GM12878 (cell line): ENCODE measurements at regions of chr7 and their contacts with region 1.

Region 1: DNA sequence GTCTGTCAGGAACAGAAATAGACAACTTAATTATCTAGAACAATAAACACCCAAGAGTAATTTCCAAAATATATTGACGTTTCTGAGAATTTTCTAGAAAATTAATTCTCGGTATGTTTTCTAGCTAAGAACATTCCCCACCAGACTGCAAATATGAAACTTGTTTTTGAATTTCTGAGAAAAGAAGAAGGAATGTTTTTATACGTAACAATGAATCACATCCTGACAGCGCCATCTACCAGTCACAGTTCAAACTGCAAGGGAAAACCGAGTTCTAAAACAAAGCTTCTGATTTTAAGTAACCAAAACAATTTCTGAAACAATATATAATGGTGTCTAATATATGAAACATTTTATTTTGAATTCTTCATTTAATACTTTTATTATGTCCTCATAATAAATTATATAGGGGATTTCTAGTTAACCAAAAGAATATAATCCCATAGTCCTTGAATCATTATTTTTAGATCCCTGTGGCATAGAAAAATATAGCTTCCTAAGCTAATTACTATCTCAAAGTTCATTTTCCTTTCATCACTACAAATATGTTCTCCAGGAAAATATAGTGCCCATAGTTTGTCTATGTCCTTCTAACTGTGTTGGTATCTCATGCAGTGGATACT is 34.5 kb upstream of the MEOX2 start:
- DNase-seq: no peak
- ATAC-seq: no peak
- H3K4me3 ChIP-seq: no peak overlapping the region
- H3K27ac ChIP-seq: no peak overlapping the region
- H3K4me1 ChIP-seq: no peaks in the 10 kb centered on the region
- H3K27me3 ChIP-seq: no peaks in the 10 kb centered on the region
- CTCF ChIP-seq: peak; percentile 53 to 77 (median 64)
- EP300 ChIP-seq: no peak
- POLR2A ChIP-seq: no peak
- RAD21 ChIP-seq: peak; percentile 57

Region 2: DNA sequence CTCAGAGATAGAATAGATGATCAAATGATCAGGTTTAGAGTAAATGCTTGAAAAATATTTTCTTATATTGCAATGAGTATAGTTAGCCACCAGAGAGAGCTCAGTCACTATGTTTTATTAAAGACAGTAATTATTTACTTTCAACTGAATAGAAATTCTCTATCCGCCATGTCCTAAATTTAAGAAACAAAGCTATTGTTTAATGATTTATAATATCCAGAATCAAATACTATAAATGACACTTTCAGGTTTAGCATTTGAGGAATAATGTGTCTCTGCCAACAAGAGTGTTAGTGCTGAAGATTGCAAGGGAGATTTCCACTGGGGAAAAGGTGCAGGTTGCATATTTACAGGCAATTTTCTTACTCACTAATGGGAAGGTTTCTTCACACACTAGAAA is 1003.1 kb before region 1 on chr7:
- CTCF ChIA-PET with region 1: interaction called, 6 read pairs
- POLR2A ChIA-PET with region 1: no interaction called
- RAD21 ChIA-PET with region 1: interaction called, 5 read pairs
- SMC1A ChIA-PET with region 1: no interaction called
- in situ Hi-C with region 1: loop called (anchors 25 kb)
- intact Hi-C with region 1: no loop called
- DNase-seq: no peak
- ATAC-seq: no peak
- H3K4me3 ChIP-seq: no peak overlapping the region
- H3K27ac ChIP-seq: no peak overlapping the region
- H3K4me1 ChIP-seq: no peaks in the 10 kb centered on the region
- H3K27me3 ChIP-seq: peaks cover 0 to 3% of the 10 kb centered on the region in 2 experiments; a peak in 1 of 4 replicates
- CTCF ChIP-seq: peak in 2 of 3 experiments; percentile 7 to 12; a peak in 3 of 6 replicates
- EP300 ChIP-seq: no peak
- POLR2A ChIP-seq: no peak
- RAD21 ChIP-seq: peak; percentile 49

Region 3: DNA sequence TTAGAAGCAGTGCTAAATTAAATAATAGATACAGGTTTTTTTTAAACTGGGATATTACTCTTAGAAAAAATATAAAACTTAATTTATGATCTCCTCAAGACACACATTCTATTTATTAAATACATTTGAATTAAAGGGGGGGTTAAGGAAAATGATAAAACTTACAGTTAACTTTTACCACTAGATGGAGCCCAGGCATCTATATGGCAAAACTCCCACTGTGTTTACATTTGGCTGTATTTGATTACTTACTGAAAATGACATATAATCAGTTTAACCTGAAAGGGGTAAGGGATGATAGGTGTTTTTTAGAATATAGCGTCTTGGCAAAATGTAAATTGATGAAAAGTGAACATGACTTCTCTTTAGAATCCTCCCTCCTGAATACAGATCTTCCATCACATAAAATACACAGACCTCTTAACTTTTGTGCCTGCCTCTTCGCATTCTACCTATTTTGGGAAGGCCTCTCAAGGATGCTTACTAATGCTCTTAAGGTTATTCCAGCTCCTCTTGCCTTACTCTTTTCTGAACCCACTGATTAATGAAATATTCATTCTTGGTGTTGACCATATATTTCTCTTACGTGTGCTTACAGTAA is 394.8 kb before region 1 on chr7:
- CTCF ChIA-PET with region 1: interaction called, 94 read pairs
- POLR2A ChIA-PET with region 1: interaction called, 3 read pairs
- RAD21 ChIA-PET with region 1: interaction called, 26 read pairs
- SMC1A ChIA-PET with region 1: interaction called, 68 read pairs
- in situ Hi-C with region 1: no loop called
- intact Hi-C with region 1: loop called (anchors 1 kb)
- DNase-seq: no peak
- ATAC-seq: peak; percentile 62
- H3K4me3 ChIP-seq: no peak overlapping the region
- H3K27ac ChIP-seq: no peak overlapping the region
- H3K4me1 ChIP-seq: no peaks in the 10 kb centered on the region
- H3K27me3 ChIP-seq: no peaks in the 10 kb centered on the region
- CTCF ChIP-seq: peak; percentile 21 to 49 (median 28); a peak in 3 of 6 replicates
- EP300 ChIP-seq: no peak
- POLR2A ChIP-seq: no peak
- RAD21 ChIP-seq: peak; percentile 33

Region 4: DNA sequence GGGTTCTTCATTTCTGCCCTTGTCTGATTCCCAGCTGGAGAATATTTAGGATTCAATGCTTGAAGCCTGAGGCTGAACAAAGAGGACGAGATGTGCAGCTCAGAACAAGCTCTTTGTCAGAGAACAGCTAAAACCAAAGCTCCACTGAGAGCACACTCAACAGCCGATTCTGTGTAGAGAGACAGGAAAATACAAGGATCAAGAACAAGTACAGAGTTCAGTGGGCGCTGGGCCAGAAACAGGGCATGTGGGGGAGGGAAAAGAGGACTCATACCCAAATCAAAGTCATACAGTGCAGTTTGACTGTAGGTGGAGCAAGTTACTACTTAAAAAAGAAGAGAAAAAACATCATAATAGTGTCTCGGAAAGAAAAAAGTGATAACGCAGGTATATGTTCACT is 159.1 kb before region 1 on chr7 and contains the start of gene AGMO:
- CTCF ChIA-PET with region 1: interaction called, 55 read pairs
- POLR2A ChIA-PET with region 1: interaction called, 4 read pairs
- RAD21 ChIA-PET with region 1: interaction called, 37 read pairs
- SMC1A ChIA-PET with region 1: interaction called, 32 read pairs
- in situ Hi-C with region 1: no loop called
- intact Hi-C with region 1: no loop called
- DNase-seq: no peak
- ATAC-seq: peak; percentile 37
- H3K4me3 ChIP-seq: no peak within 1 kb of the TSS
- H3K27ac ChIP-seq: no peak within 1 kb of the TSS
- H3K4me1 ChIP-seq: no peaks in the 10 kb centered on the region
- H3K27me3 ChIP-seq: no peaks in the 10 kb centered on the region
- CTCF ChIP-seq: no peak; a peak in 1 of 6 replicates
- EP300 ChIP-seq: no peak
- POLR2A ChIP-seq: no peak
- RAD21 ChIP-seq: no peak
- polyA plus RNA-seq, gene AGMO: 0.29 TPM in 1 of 2 experiments, not detected in the other

Region 5: DNA sequence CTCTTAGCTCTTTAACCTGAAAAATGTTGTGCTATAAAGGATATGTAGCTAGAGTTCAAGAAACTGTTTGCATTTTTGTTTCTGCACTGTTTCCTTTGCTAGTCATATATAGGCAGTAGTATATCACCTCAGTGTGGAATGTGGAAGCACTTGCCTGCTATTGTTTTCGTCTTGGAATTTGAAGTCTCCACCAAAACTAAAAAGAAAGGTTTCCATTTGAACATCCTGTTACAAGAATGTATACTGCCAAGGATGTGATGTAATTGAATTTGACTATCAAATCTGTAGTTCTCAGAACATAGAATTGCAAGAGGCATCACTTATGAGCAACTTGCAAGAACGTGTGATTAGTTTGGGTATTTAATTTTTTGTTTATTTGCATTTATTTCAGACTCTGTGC is 16.6 kb after region 1 on chr7:
- CTCF ChIA-PET with region 1: interaction called, 23 read pairs
- POLR2A ChIA-PET with region 1: no interaction called
- RAD21 ChIA-PET with region 1: interaction called, 8 read pairs
- SMC1A ChIA-PET with region 1: interaction called, 5 read pairs
- in situ Hi-C with region 1: no loop called
- intact Hi-C with region 1: no loop called
- DNase-seq: no peak
- ATAC-seq: no peak
- H3K4me3 ChIP-seq: no peak overlapping the region
- H3K27ac ChIP-seq: no peak overlapping the region
- H3K4me1 ChIP-seq: no peaks in the 10 kb centered on the region
- H3K27me3 ChIP-seq: no peaks in the 10 kb centered on the region
- CTCF ChIP-seq: no peak
- EP300 ChIP-seq: no peak
- POLR2A ChIP-seq: no peak
- RAD21 ChIP-seq: no peak